Pancreas (tissue), 10 donors: ENCODE measurements at regions of chr2 and their contacts with region 1.

Region 1: DNA sequence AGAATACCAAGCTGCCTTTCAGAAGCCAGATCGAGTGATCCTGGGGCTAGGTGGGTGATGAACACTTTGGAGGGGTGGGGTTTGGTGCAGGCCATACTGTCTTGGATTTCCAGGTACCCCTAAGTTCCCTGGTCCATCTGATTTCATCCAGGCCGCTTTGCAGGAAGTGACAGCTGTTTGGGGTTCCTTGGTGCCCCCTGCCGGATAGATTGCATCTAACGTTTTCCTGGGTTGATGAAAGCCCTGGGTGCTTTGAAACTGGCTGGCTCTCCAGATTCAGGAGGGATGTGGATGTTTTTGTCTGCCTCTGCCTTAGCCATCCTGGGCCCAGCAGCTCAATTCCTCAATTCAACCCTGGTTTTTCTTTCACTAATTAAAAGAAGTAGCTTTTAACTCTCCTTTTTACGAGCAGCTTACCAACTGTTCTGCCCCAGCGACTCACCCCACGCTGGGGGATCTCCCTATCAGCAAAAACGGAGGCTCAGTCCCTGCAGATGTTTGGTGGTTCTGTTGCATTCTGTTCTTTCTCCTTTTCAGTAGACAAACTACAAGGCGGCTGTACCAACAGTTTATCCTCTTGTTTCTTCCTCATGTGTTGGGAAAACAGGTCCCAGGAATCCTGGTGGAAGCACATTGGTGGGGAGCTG is 37.1 kb downstream of the ARHGEF4 start:
- DNase-seq: peak in 5 of 6 donors; percentile 52 to 79 (median 63)
- ATAC-seq: peak; percentile 71 to 96 (median 90)
- H3K4me3 ChIP-seq: no peak overlapping the region
- H3K27ac ChIP-seq: no peak overlapping the region
- H3K4me1 ChIP-seq: no peaks in the 10 kb centered on the region
- H3K27me3 ChIP-seq: no peaks in the 10 kb centered on the region
- CTCF ChIP-seq: peak; percentile 30 to 48 (median 46)

Region 2: GRCh38 chr2:130797493-130798435 is 76.1 kb before region 1 on chr2:
- intact Hi-C with region 1: loop called in 2 of 3 experiments (anchors 2 to 5 kb)
- DNase-seq: peak; percentile 80 to 98 (median 91)
- ATAC-seq: peak; percentile 95 to 99 (median 97)
- H3K4me3 ChIP-seq: peak overlapping the region; percentile 69 to 84 (median 76)
- H3K27ac ChIP-seq: peak overlapping the region; percentile 86 to 91 (median 88)
- H3K4me1 ChIP-seq: no peaks in the 10 kb centered on the region
- H3K27me3 ChIP-seq: no peaks in the 10 kb centered on the region
- CTCF ChIP-seq: peak; percentile 88 to 94 (median 92)

Region 3: DNA sequence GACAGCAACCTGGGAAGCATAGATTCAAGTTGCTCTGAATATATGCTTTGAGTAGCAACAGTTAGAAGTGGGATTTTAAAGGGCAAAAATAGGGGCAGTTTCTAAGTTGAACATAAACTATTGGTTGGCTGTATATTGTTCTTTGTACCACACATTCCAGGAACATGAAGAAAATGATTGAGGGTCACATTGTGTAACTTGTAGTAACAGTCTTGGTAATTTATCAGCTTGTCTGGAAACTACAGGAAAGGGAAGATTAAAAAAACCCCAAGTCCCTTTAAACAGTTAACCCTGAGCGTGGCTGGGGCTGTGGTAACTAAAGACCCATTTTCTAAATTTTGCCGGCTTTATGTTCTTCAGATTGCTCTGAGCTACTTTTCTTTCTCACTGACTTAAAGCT is 238.7 kb after region 1 on chr2:
- intact Hi-C with region 1: no loop called
- DNase-seq: no peak
- ATAC-seq: peak in 3 of 4 donors; percentile 23 to 39 (median 36)
- H3K4me3 ChIP-seq: no peak overlapping the region
- H3K27ac ChIP-seq: peak overlapping the region in 1 of 4 donors; percentile 25
- H3K4me1 ChIP-seq: peaks cover 0 to 8% (median 0%) of the 10 kb centered on the region in 3 donors
- H3K27me3 ChIP-seq: no peaks in the 10 kb centered on the region
- CTCF ChIP-seq: no peak